ENCODE measurements at regions of chr6 and their contacts with region 1.

Region 1: GRCh38 chr6:34887753-34888513 is at the start of gene TAF11:
- DNase-seq: peak; percentile 94 to 96 (median 95)
- ATAC-seq: peak; percentile 91 to 96 (median 94)
- H3K4me3 ChIP-seq: peak within 1 kb of the TSS; percentile 65 to 95 (median 83)
- H3K27ac ChIP-seq: peak within 1 kb of the TSS; percentile 11 to 93 (median 80)
- H3K4me1 ChIP-seq: peaks cover 0 to 55% (median 24%) of the 10 kb centered on the region in 12 donors
- H3K27me3 ChIP-seq: no peaks in the 10 kb centered on the region
- CTCF ChIP-seq: no peak
- POLR2A ChIP-seq: peak in 1 of 2 donors; percentile 67
- total RNA-seq, gene TAF11: 14.6 to 25.9 (median 19.9) TPM

Region 2: DNA sequence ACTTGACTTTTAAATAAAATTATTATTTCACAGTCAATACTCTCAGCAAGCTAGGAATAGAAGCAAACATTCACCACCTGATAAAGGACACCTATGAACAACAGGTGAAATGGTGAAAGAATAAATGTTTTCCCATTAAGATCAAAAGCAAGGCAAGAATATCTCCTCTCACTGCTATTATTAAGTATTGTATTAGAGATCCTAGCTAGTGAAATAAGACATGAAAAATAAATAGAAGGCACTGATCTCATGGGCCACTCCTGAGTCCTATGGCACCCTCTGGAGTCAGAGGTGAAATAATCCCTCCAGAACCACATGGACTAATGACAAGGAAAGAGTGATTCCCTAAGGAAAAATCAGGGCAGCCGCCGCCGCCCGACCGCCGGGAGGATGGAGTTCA is 491.4 kb before region 1 on chr6:
- intact Hi-C with region 1: no loop called
- DNase-seq: no peak
- ATAC-seq: no peak
- H3K4me3 ChIP-seq: no peak overlapping the region
- H3K27ac ChIP-seq: no peak overlapping the region
- H3K4me1 ChIP-seq: peaks cover 0 to 15% (median 7%) of the 10 kb centered on the region in 12 donors
- H3K27me3 ChIP-seq: no peaks in the 10 kb centered on the region
- CTCF ChIP-seq: no peak
- POLR2A ChIP-seq: no peak

Region 3: DNA sequence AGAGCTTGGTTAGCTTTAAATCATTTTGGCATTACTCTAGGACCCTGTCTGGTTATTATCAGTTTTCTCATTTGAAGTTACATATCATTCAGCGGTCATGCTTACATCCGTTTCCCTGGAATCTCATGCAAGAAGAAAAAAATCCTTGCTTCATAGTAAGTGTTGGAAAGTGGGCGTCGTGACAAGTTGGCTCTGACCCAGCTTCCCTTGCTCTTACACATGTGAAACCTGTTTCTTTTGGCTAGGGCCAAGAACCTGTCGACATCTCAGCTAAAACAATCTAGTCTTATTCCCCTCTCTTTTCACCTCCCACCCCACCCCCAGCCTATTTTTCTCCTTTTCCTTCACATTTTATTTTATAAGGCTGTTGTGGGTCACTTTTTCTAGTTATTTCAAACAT is 46.6 kb after region 1 on chr6:
- intact Hi-C with region 1: loop called in 1 of 10 experiments (anchors 5 kb)
- DNase-seq: peak; percentile 83 to 91 (median 85)
- ATAC-seq: peak; percentile 39 to 84 (median 83)
- H3K4me3 ChIP-seq: no peak overlapping the region
- H3K27ac ChIP-seq: peak overlapping the region in 9 of 12 donors; percentile 31 to 74 (median 48)
- H3K4me1 ChIP-seq: peaks cover 0 to 62% (median 42%) of the 10 kb centered on the region in 12 donors
- H3K27me3 ChIP-seq: no peaks in the 10 kb centered on the region
- CTCF ChIP-seq: no peak
- POLR2A ChIP-seq: no peak

Region 4: GRCh38 chr6:34955442-34955841 is 67.5 kb after region 1 on chr6:
- intact Hi-C with region 1: loop called in 4 of 10 experiments (anchors 5 kb)
- DNase-seq: peak in 1 of 5 donors; percentile 13
- ATAC-seq: peak in 3 of 4 donors; percentile 14 to 27 (median 23)
- H3K4me3 ChIP-seq: no peak overlapping the region
- H3K27ac ChIP-seq: peak overlapping the region in 3 of 12 donors; percentile 15 to 70 (median 18)
- H3K4me1 ChIP-seq: peaks cover 0 to 76% (median 44%) of the 10 kb centered on the region in 12 donors
- H3K27me3 ChIP-seq: no peaks in the 10 kb centered on the region
- CTCF ChIP-seq: no peak
- POLR2A ChIP-seq: no peak

Region 5: DNA sequence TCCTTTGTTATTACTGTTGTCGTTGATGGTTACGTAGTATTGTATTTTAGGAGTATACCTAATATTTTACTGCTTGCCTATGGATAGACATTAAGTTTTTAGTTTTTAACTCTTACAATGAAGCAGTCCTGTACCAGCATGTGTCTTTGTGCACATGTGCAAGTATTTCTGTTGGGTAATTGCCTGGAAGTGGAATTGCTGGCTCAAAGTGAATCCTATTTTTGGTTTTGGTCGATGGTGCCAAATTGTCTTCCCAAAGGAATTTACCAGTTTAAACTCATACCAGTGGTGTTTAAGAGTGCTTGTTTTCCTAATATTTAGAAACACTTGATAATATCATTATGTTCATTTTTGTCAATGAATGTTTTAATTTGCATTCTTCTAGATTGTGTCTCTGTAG is 76.6 kb after region 1 on chr6:
- intact Hi-C with region 1: loop called in 6 of 10 experiments (anchors 2 to 5 kb)
- DNase-seq: peak in 2 of 5 donors; percentile 29 to 31
- ATAC-seq: peak; percentile 40 to 69 (median 53)
- H3K4me3 ChIP-seq: no peak overlapping the region
- H3K27ac ChIP-seq: peak overlapping the region in 10 of 12 donors; percentile 12 to 71 (median 54)
- H3K4me1 ChIP-seq: peaks cover 0 to 54% (median 42%) of the 10 kb centered on the region in 12 donors
- H3K27me3 ChIP-seq: no peaks in the 10 kb centered on the region
- CTCF ChIP-seq: no peak
- POLR2A ChIP-seq: no peak

Region 6: GRCh38 chr6:34973547-34974248 is 85.8 kb after region 1 on chr6:
- intact Hi-C with region 1: loop called in 4 of 10 experiments (anchors 5 kb)
- DNase-seq: no peak
- ATAC-seq: no peak
- H3K4me3 ChIP-seq: no peak overlapping the region
- H3K27ac ChIP-seq: no peak overlapping the region
- H3K4me1 ChIP-seq: peaks cover 0 to 3% (median 0%) of the 10 kb centered on the region in 12 donors
- H3K27me3 ChIP-seq: no peaks in the 10 kb centered on the region
- CTCF ChIP-seq: peak in 5 of 12 donors; percentile 16 to 26 (median 20)
- POLR2A ChIP-seq: no peak